Gastrocnemius medialis (tissue), 4 donors: ENCODE measurements at regions of chr10 and their contacts with region 1.

Region 1: GRCh38 chr10:72337020-72337629 is 17.6 kb downstream of the DNAJB12 start:
- DNase-seq: peak; percentile 62 to 85
- ATAC-seq: peak; percentile 32 to 49
- H3K4me3 ChIP-seq: no peak overlapping the region
- H3K27ac ChIP-seq: peak overlapping the region; percentile 85 to 95 (median 90)
- H3K4me1 ChIP-seq: peaks cover 35 to 49% of the 10 kb centered on the region in 2 donors
- H3K27me3 ChIP-seq: no peaks in the 10 kb centered on the region
- CTCF ChIP-seq: peak; percentile 96 to 99 (median 98)
- POLR2A ChIP-seq: no peak

Region 2: DNA sequence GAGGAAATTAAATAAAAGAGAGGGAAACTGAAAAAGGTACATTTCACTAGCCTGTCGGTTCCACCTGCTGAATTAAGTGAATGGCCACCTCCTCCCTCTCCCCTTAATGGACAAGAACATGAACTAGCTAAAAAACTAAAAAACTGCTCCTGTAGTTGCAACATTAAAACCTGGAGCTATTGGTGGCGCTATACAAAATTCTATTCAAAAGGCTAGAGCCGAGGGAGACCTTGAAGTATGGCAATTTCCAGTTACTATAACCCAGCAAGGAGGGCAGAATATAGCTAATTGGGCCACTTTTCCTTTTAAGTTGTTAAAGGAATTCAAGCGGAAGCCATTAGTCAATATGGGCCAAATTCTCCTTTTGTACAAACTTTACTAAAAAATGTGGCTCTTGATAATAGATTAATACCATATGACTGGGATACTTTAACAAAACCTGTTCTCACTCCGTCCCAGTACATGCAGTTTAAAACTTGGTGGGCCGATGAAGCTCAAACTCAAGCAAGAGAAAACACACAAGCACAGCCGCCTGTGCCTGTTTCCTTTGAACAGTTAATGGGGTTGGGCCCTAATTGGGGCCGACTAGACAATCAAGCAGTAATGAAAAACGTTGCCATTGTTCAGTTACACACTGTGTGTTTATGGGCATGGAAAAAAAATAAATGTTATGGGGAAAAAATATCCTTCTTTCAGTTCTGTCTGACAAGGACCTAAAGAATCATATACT is 379.4 kb before region 1 on chr10:
- in situ Hi-C with region 1: loop called (anchors 10 to 25 kb)
- intact Hi-C with region 1: loop called (anchors 2 kb)
- DNase-seq: no peak
- ATAC-seq: no peak
- H3K4me3 ChIP-seq: no peak overlapping the region
- H3K27ac ChIP-seq: no peak overlapping the region
- H3K4me1 ChIP-seq: peaks cover 6 to 11% of the 10 kb centered on the region in 2 donors
- H3K27me3 ChIP-seq: no peaks in the 10 kb centered on the region
- CTCF ChIP-seq: no peak
- POLR2A ChIP-seq: no peak

Region 3: GRCh38 chr10:72048450-72049124 is 288.5 kb before region 1 on chr10:
- in situ Hi-C with region 1: loop called in 2 of 4 experiments (anchors 5 kb)
- intact Hi-C with region 1: loop called (anchors 2 kb)
- DNase-seq: peak; percentile 83 to 90
- ATAC-seq: peak; percentile 90 to 93
- H3K4me3 ChIP-seq: no peak overlapping the region
- H3K27ac ChIP-seq: no peak overlapping the region
- H3K4me1 ChIP-seq: peaks cover 9 to 10% of the 10 kb centered on the region in 2 donors
- H3K27me3 ChIP-seq: no peaks in the 10 kb centered on the region
- CTCF ChIP-seq: peak; percentile 99 to 100 (median 100)
- POLR2A ChIP-seq: no peak

Region 4: DNA sequence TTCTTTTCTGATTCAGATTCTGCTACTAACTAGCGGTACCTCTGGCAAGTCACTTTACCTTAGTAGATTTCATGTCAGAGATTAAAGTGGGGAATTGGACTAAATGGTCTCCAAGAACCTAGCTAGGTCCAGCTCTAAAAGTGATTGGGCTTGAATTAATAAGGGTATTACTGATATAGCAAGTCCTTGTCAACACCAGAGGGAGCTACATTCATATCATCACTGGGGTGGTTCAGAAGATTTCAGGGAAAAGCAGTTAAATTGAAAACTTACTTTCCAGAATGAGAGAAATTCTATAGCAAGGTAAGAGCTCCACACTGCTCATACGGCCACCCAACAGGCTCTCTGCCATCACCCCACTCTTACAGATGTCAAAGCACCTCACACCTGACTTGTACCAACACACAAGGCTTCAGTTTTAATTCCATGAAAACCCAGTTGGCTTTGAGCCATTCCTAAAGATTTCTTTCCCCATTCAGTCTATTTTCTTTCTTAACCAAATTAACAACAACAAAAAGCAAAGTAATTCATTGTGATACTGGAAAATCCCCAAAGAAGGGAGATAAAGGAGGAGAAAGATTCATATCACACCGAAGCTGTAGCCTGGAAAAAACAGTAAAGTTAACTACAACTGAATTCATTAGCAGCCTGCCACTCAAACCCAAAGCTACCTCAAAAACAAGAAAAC is 210.8 kb before region 1 on chr10:
- in situ Hi-C with region 1: loop called in 2 of 4 experiments (anchors 10 to 25 kb)
- intact Hi-C with region 1: loop called (anchors 2 kb)
- DNase-seq: no peak
- ATAC-seq: peak in 1 of 2 donors; percentile 24
- H3K4me3 ChIP-seq: no peak overlapping the region
- H3K27ac ChIP-seq: no peak overlapping the region
- H3K4me1 ChIP-seq: peaks cover 0 to 7% of the 10 kb centered on the region in 2 donors
- H3K27me3 ChIP-seq: no peaks in the 10 kb centered on the region
- CTCF ChIP-seq: peak; percentile 28 to 47 (median 46)
- POLR2A ChIP-seq: no peak

Region 5: DNA sequence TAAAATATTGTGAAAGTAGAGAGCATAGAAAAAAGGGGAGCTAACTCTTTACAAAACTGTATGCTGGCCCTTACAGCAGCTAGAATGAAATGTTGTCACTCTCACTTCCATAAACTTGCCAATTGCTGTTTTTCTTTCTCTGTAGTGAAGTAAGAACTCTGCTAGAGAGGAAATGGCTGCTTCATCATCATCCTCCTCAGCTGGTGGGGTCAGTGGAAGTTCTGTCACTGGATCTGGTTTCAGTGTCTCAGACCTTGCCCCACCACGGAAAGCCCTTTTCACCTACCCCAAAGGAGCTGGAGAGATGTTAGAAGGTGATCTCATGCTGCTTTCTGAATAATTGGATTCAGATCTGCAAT is 113.4 kb before region 1 on chr10:
- in situ Hi-C with region 1: loop called in 2 of 4 experiments (anchors 10 to 25 kb)
- intact Hi-C with region 1: loop called (anchors 2 kb)
- DNase-seq: peak in 1 of 2 donors; percentile 67
- ATAC-seq: peak; percentile 14 to 44
- H3K4me3 ChIP-seq: peak overlapping the region in 1 of 4 donors; percentile 0
- H3K27ac ChIP-seq: peak overlapping the region; percentile 94 to 99 (median 98)
- H3K4me1 ChIP-seq: peaks cover 54 to 75% of the 10 kb centered on the region in 2 donors
- H3K27me3 ChIP-seq: no peaks in the 10 kb centered on the region
- CTCF ChIP-seq: no peak
- POLR2A ChIP-seq: no peak